Activated T-helper 1 cell treated with anti-CD3 and anti-CD28 coated beads, Interleukin-12 subunit alpha, Interleukin-12 subunit beta, Interleukin-2, Interleukin-4 antibody, amounts not matched to agents 30 ng/mL and 10 ng/mL and 1 ng/mL, durations not matched to agents 14 hours and 24 hours and 36 hours (primary cell): ENCODE measurements at regions of chr15 and their contacts with region 1.

Region 1: GRCh38 chr15:100596792-100597191 is 5.2 kb downstream of the LINS1 start:
- DNase-seq: peak; percentile 92
- H3K4me3 Mint-ChIP-seq: peak overlapping the region; percentile 86
- H3K27ac Mint-ChIP-seq: peak overlapping the region; percentile 97
- H3K4me1 Mint-ChIP-seq: peaks cover 69% of the 10 kb centered on the region
- H3K27me3 Mint-ChIP-seq: peaks cover 3% of the 10 kb centered on the region

Region 2: GRCh38 chr15:100170291-100171210 is 426.2 kb before region 1 on chr15:
- intact Hi-C with region 1: loop called (anchors 1 kb)
- DNase-seq: peak; percentile 43
- H3K4me3 Mint-ChIP-seq: no peak overlapping the region
- H3K27ac Mint-ChIP-seq: peak overlapping the region; percentile 83
- H3K4me1 Mint-ChIP-seq: peaks cover 15% of the 10 kb centered on the region
- H3K27me3 Mint-ChIP-seq: peaks cover 1% of the 10 kb centered on the region

Region 3: DNA sequence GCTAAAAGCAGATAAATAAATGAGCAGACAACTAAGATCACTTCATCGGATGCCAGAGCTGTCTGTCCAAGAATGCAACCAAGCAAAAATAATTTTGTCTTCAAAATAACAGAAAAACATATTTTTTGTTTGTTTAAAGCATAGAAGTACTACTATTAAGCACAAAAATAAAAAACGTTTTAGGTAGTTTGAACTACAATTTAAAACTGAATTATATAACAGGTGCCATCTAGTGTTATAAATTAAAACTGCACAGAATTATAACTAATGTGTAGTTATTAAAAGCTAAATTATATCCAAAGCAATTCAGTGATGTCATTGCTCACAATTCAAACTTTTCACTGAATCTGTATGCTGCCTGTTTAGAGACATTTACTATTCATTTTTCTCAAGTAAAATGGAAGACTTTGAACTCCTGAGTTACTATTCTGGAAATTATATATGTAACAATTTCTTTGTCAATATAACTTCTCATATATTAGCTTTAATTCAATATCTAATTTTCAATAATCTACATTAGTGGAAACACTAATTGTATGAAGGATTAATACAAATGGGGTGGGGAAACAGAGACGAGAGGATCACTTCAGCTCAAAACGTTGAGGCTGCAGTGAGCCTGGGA is 24.3 kb before region 1 on chr15:
- intact Hi-C with region 1: loop called (anchors 1 kb)
- DNase-seq: no peak
- H3K4me3 Mint-ChIP-seq: peak overlapping the region; percentile 74
- H3K27ac Mint-ChIP-seq: peak overlapping the region; percentile 81
- H3K4me1 Mint-ChIP-seq: peaks cover 69% of the 10 kb centered on the region
- H3K27me3 Mint-ChIP-seq: no peaks in the 10 kb centered on the region

Region 4: GRCh38 chr15:100580414-100580813 is 16.4 kb before region 1 on chr15:
- intact Hi-C with region 1: loop called (anchors 2 kb)
- DNase-seq: no peak
- H3K4me3 Mint-ChIP-seq: no peak overlapping the region
- H3K27ac Mint-ChIP-seq: peak overlapping the region; percentile 35
- H3K4me1 Mint-ChIP-seq: peaks cover 48% of the 10 kb centered on the region
- H3K27me3 Mint-ChIP-seq: no peaks in the 10 kb centered on the region